Sigmoid colon (tissue), 7 donors: ENCODE measurements at regions of chr11 and their contacts with region 1.

Region 1: DNA sequence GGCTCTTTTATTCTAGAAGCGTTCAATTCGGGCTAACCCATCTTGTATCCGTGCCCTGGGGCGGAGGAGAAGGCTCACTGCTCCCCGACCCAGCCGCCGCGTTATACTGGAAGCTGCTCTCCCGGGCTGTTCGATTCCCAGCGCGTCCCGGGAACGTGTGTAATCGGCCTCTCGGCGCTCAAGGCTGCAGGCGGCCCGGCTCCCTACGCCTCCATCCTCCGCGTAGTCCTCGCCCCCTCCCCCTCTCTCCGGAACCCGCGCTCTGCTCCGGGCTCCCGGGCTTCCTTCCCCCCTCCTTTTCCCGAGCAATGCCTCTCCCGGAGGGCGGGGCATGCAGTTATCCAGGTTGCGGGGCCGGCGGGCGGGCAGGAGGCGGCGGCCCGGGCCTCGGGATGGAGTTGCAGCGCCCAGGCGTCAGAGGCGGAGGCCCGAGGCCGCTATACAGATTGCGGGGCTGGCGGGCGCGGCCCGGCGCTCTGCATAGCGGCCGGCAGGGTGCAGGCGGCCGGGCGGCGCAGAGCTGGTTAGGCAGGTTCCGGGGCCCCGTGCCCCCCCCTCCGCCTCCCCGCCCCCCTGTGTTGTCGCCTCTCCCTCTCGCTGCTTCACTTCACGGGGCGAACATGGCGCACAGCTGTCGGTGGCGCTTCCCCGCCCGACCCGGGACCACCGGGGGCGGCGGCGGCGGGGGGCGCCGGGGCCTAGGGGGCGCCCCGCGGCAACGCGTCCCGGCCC is at the start of gene KMT2A:
- DNase-seq: peak; percentile 99
- H3K4me3 ChIP-seq: peak within 1 kb of the TSS; percentile 88 to 100 (median 98)
- H3K27ac ChIP-seq: peak within 1 kb of the TSS; percentile 93 to 97 (median 95)
- H3K4me1 ChIP-seq: peaks cover 3 to 57% (median 40%) of the 10 kb centered on the region in 4 donors
- H3K27me3 ChIP-seq: no peaks in the 10 kb centered on the region
- CTCF ChIP-seq: peak in 3 of 4 experiments; percentile 67 to 89 (median 72)
- EP300 ChIP-seq: no peak
- POLR2A ChIP-seq: no peak
- total RNA-seq, gene KMT2A: 42.9 to 93.9 (median 62.8) TPM

Region 2: GRCh38 chr11:118401151-118401878 is 34.7 kb before region 1 on chr11 and contains the start of gene ATP5MG:
- intact Hi-C with region 1: loop called (anchors 1 kb)
- DNase-seq: peak; percentile 94
- H3K4me3 ChIP-seq: peak within 1 kb of the TSS; percentile 70 to 94 (median 88)
- H3K27ac ChIP-seq: peak within 1 kb of the TSS; percentile 85 to 89 (median 86)
- H3K4me1 ChIP-seq: peaks cover 0 to 46% (median 36%) of the 10 kb centered on the region in 4 donors
- H3K27me3 ChIP-seq: no peaks in the 10 kb centered on the region
- CTCF ChIP-seq: peak in 2 of 4 experiments; percentile 19 to 24
- EP300 ChIP-seq: no peak
- POLR2A ChIP-seq: peak; percentile 64 to 72
- total RNA-seq, gene ATP5MG: 54.7 to 141 (median 84.8) TPM

Region 3: DNA sequence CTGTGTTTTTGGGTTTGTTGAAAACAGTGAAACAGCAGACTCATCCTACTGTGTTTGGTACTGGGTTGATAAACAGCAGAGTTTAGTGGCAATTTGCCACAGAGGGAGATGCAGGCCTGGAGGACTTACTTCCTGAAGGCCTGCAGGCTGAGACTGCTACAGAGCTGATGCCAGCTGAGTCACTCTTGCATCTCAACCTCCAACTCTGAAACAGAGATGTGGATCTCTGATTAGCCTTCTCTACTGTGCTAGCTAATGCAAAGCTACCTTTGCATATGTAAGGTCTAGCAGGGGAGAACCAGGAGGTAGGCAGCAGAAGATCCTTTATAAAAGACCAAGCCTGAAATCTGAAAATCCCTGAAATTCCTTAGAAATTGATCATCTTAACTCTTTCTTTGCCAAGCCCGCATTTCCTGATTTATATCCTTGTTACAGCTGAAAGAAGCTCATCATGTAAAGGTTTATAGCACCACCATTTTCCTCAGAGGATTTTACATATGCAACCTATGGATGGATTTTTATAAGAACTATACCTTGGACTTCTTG is 20.2 kb before region 1 on chr11:
- intact Hi-C with region 1: loop called (anchors 2 kb)
- DNase-seq: peak; percentile 89
- H3K4me3 ChIP-seq: no peak overlapping the region
- H3K27ac ChIP-seq: peak overlapping the region in 3 of 4 donors; percentile 37 to 54 (median 51)
- H3K4me1 ChIP-seq: peaks cover 0 to 16% (median 12%) of the 10 kb centered on the region in 4 donors
- H3K27me3 ChIP-seq: no peaks in the 10 kb centered on the region
- CTCF ChIP-seq: no peak
- EP300 ChIP-seq: no peak
- POLR2A ChIP-seq: no peak

Region 4: GRCh38 chr11:118497831-118498230 is 61.8 kb after region 1 on chr11:
- intact Hi-C with region 1: no loop called
- DNase-seq: no peak
- H3K4me3 ChIP-seq: no peak overlapping the region
- H3K27ac ChIP-seq: no peak overlapping the region
- H3K4me1 ChIP-seq: no peaks in the 10 kb centered on the region
- H3K27me3 ChIP-seq: no peaks in the 10 kb centered on the region
- CTCF ChIP-seq: no peak
- EP300 ChIP-seq: no peak
- POLR2A ChIP-seq: no peak